Activated CD4-positive, alpha-beta memory T cell treated with anti-CD3 and anti-CD28 coated beads for 36 hours (primary cell): ENCODE measurements at regions of chr12 and their contacts with region 1.

Region 1: GRCh38 chr12:6851921-6852650 is at the start of gene USP5:
- DNase-seq: peak; percentile 99
- H3K4me3 Mint-ChIP-seq: peak within 1 kb of the TSS; percentile 95
- H3K27ac Mint-ChIP-seq: peak within 1 kb of the TSS; percentile 98
- H3K4me1 Mint-ChIP-seq: peaks cover 29% of the 10 kb centered on the region
- H3K27me3 Mint-ChIP-seq: no peaks in the 10 kb centered on the region
- total RNA-seq, gene USP5: 125 to 130 TPM

Region 2: GRCh38 chr12:6423267-6424007 is 428.6 kb before region 1 on chr12:
- CTCF ChIA-PET with region 1: no interaction called
- POLR2A ChIA-PET with region 1: no interaction called
- intact Hi-C with region 1: loop called (anchors 5 kb)
- DNase-seq: peak; percentile 86
- H3K4me3 Mint-ChIP-seq: no peak overlapping the region
- H3K27ac Mint-ChIP-seq: peak overlapping the region; percentile 69
- H3K4me1 Mint-ChIP-seq: peaks cover 43% of the 10 kb centered on the region
- H3K27me3 Mint-ChIP-seq: peaks cover 3% of the 10 kb centered on the region

Region 3: GRCh38 chr12:6607751-6608591 is 244.1 kb before region 1 on chr12:
- CTCF ChIA-PET with region 1: no interaction called
- POLR2A ChIA-PET with region 1: interaction called, 7 read pairs
- intact Hi-C with region 1: loop called (anchors 1 kb)
- DNase-seq: peak; percentile 82
- H3K4me3 Mint-ChIP-seq: no peak overlapping the region
- H3K27ac Mint-ChIP-seq: no peak overlapping the region
- H3K4me1 Mint-ChIP-seq: peaks cover 53% of the 10 kb centered on the region
- H3K27me3 Mint-ChIP-seq: no peaks in the 10 kb centered on the region

Region 4: GRCh38 chr12:6723607-6724396 is 128.3 kb before region 1 on chr12 and contains the start of gene COPS7A:
- CTCF ChIA-PET with region 1: no interaction called
- POLR2A ChIA-PET with region 1: interaction called, 21 read pairs
- intact Hi-C with region 1: loop called (anchors 1 kb)
- DNase-seq: peak; percentile 99
- H3K4me3 Mint-ChIP-seq: peak within 1 kb of the TSS; percentile 83
- H3K27ac Mint-ChIP-seq: peak within 1 kb of the TSS; percentile 84
- H3K4me1 Mint-ChIP-seq: peaks cover 25% of the 10 kb centered on the region
- H3K27me3 Mint-ChIP-seq: no peaks in the 10 kb centered on the region
- total RNA-seq, gene COPS7A: 37.6 to 39.4 TPM

Region 5: GRCh38 chr12:6807170-6807569 is 44.9 kb before region 1 on chr12:
- CTCF ChIA-PET with region 1: no interaction called
- POLR2A ChIA-PET with region 1: no interaction called
- intact Hi-C with region 1: no loop called
- DNase-seq: no peak
- H3K4me3 Mint-ChIP-seq: no peak overlapping the region
- H3K27ac Mint-ChIP-seq: no peak overlapping the region
- H3K4me1 Mint-ChIP-seq: peaks cover 13% of the 10 kb centered on the region
- H3K27me3 Mint-ChIP-seq: no peaks in the 10 kb centered on the region

Region 6: GRCh38 chr12:6839482-6840201 is 12.4 kb before region 1 on chr12:
- CTCF ChIA-PET with region 1: interaction called, 41 read pairs
- POLR2A ChIA-PET with region 1: interaction called, 16 read pairs
- intact Hi-C with region 1: no loop called
- DNase-seq: no peak
- H3K4me3 Mint-ChIP-seq: no peak overlapping the region
- H3K27ac Mint-ChIP-seq: no peak overlapping the region
- H3K4me1 Mint-ChIP-seq: peaks cover 2% of the 10 kb centered on the region
- H3K27me3 Mint-ChIP-seq: no peaks in the 10 kb centered on the region

Region 7: GRCh38 chr12:6890789-6891645 is 38.9 kb after region 1 on chr12:
- CTCF ChIA-PET with region 1: interaction called, 26 read pairs
- POLR2A ChIA-PET with region 1: interaction called, 5 read pairs
- intact Hi-C with region 1: loop called (anchors 1 kb)
- DNase-seq: peak; percentile 99
- H3K4me3 Mint-ChIP-seq: peak overlapping the region; percentile 84
- H3K27ac Mint-ChIP-seq: peak overlapping the region; percentile 97
- H3K4me1 Mint-ChIP-seq: peaks cover 17% of the 10 kb centered on the region
- H3K27me3 Mint-ChIP-seq: no peaks in the 10 kb centered on the region

Region 8: GRCh38 chr12:6944381-6945186 is 92.5 kb after region 1 on chr12:
- CTCF ChIA-PET with region 1: no interaction called
- POLR2A ChIA-PET with region 1: interaction called, 22 read pairs
- intact Hi-C with region 1: loop called (anchors 1 kb)
- DNase-seq: peak; percentile 95
- H3K4me3 Mint-ChIP-seq: peak overlapping the region; percentile 90
- H3K27ac Mint-ChIP-seq: peak overlapping the region; percentile 100
- H3K4me1 Mint-ChIP-seq: peaks cover 56% of the 10 kb centered on the region
- H3K27me3 Mint-ChIP-seq: peaks cover 6% of the 10 kb centered on the region